ENCODE measurements at regions of chr17 and their contacts with region 1.

Region 1: GRCh38 chr17:79796763-79797491 is at the start of gene CBX8:
- DNase-seq: peak; percentile 99
- ATAC-seq: peak; percentile 95 to 96
- H3K4me3 ChIP-seq: peak within 1 kb of the TSS; percentile 66 to 87 (median 76)
- H3K27ac ChIP-seq: peak within 1 kb of the TSS; percentile 74 to 82 (median 78)
- H3K4me1 ChIP-seq: peaks cover 17 to 44% of the 10 kb centered on the region in 2 donors
- H3K27me3 ChIP-seq: peaks cover 64 to 65% (median 65%) of the 10 kb centered on the region in 3 donors
- CTCF ChIP-seq: peak in 3 of 5 experiments; percentile 22 to 35 (median 33)
- POLR2A ChIP-seq: peak; percentile 33 to 36
- total RNA-seq, gene CBX8: 0.18 to 0.94 (median 0.49) TPM in 3 of 4 donors, not detected in the other

Region 2: GRCh38 chr17:79777894-79778503 is 18.9 kb before region 1 on chr17 and contains the start of gene CBX2:
- in situ Hi-C with region 1: no loop called
- intact Hi-C with region 1: loop called (anchors 1 kb)
- DNase-seq: peak in 1 of 2 donors; percentile 36
- ATAC-seq: peak; percentile 80 to 87
- H3K4me3 ChIP-seq: peak within 1 kb of the TSS; percentile 55 to 63 (median 58)
- H3K27ac ChIP-seq: peak within 1 kb of the TSS in 3 of 4 donors; percentile 65 to 71 (median 69)
- H3K4me1 ChIP-seq: peaks cover 0 to 6% of the 10 kb centered on the region in 2 donors
- H3K27me3 ChIP-seq: peaks cover 78 to 88% (median 87%) of the 10 kb centered on the region in 3 donors
- CTCF ChIP-seq: no peak
- POLR2A ChIP-seq: no peak
- total RNA-seq, gene CBX2: 0.13 to 1.1 (median 0.42) TPM in 3 of 4 donors, not detected in the other